Activated T-helper 1 cell treated with anti-CD3 and anti-CD28 coated beads, Interleukin-12 subunit alpha, Interleukin-12 subunit beta, Interleukin-2, Interleukin-4 antibody, amounts not matched to agents 30 ng/mL and 10 ng/mL and 1 ng/mL, durations not matched to agents 14 hours and 24 hours and 36 hours (primary cell): ENCODE measurements at regions of chr7 and their contacts with region 1.

Region 1: GRCh38 chr7:143214789-143215679 is 6.8 kb upstream of the TAS2R40 start:
- DNase-seq: peak; percentile 57
- H3K4me3 Mint-ChIP-seq: no peak overlapping the region
- H3K27ac Mint-ChIP-seq: no peak overlapping the region
- H3K4me1 Mint-ChIP-seq: no peaks in the 10 kb centered on the region
- H3K27me3 Mint-ChIP-seq: peaks cover 14% of the 10 kb centered on the region

Region 2: DNA sequence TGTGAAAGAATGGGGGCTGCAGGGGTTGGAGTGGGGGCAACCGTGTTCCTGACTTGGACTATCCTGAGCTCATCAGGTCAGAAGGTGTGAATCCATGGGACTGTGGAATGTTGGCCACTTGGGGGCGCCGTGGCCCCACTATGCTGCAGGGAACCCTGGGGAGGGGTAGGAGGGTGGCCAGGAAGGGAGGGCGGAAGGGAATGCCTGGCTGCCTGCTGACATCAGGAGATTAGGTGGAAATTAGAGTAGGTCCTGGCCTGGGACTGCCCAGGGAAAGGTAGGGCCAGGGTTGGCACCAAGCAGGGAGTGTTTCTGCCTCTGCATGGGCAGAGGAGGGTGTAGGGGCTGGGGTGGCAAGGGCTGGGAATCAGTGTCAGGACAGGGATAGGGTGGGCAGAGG is 891.3 kb before region 1 on chr7:
- intact Hi-C with region 1: loop called (anchors 10 kb)
- DNase-seq: no peak
- H3K4me3 Mint-ChIP-seq: no peak overlapping the region
- H3K27ac Mint-ChIP-seq: no peak overlapping the region
- H3K4me1 Mint-ChIP-seq: no peaks in the 10 kb centered on the region
- H3K27me3 Mint-ChIP-seq: peaks cover 5% of the 10 kb centered on the region

Region 3: GRCh38 chr7:142516038-142516501 is 699.0 kb before region 1 on chr7:
- intact Hi-C with region 1: loop called (anchors 5 kb)
- DNase-seq: no peak
- H3K4me3 Mint-ChIP-seq: no peak overlapping the region
- H3K27ac Mint-ChIP-seq: no peak overlapping the region
- H3K4me1 Mint-ChIP-seq: peaks cover 19% of the 10 kb centered on the region
- H3K27me3 Mint-ChIP-seq: peaks cover 7% of the 10 kb centered on the region

Region 4: GRCh38 chr7:142603870-142604448 is 611.1 kb before region 1 on chr7:
- intact Hi-C with region 1: loop called (anchors 5 kb)
- DNase-seq: no peak
- H3K4me3 Mint-ChIP-seq: no peak overlapping the region
- H3K27ac Mint-ChIP-seq: no peak overlapping the region
- H3K4me1 Mint-ChIP-seq: peaks cover 9% of the 10 kb centered on the region
- H3K27me3 Mint-ChIP-seq: peaks cover 6% of the 10 kb centered on the region

Region 5: DNA sequence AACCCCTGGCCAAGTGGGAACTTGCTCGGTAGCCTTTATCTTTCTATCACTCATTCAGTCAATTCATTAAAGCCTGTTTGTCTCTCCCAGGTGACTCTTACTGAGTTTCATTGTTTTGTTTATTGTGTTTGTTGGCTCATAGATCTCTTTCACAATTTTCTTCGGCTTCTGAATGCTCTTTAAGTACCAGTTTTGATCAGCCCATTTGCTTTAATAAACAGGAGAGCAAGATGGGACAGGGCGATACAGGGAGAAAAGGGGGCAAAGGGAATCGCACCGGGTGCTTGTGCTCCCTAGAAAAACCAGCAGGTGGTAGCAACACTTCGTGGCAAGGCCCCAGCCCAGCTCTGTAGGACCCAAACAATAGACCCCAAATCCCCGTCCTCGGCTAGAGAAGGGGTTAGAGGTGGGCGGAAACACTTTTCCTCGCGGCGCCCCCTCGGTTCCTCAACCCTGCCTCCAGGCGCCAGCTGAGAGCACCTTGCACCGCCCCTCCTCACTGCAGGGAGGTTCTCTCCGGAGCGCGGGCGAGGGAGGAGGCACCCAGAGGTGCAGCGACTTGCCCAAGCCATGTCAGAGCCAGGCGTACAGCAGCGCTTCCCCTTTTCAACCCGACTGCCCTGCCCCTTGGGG is 361.2 kb before region 1 on chr7:
- intact Hi-C with region 1: loop called (anchors 1 kb)
- DNase-seq: peak; percentile 50
- H3K4me3 Mint-ChIP-seq: peak overlapping the region; percentile 96
- H3K27ac Mint-ChIP-seq: peak overlapping the region; percentile 82
- H3K4me1 Mint-ChIP-seq: peaks cover 7% of the 10 kb centered on the region
- H3K27me3 Mint-ChIP-seq: peaks cover 25% of the 10 kb centered on the region

Region 6: DNA sequence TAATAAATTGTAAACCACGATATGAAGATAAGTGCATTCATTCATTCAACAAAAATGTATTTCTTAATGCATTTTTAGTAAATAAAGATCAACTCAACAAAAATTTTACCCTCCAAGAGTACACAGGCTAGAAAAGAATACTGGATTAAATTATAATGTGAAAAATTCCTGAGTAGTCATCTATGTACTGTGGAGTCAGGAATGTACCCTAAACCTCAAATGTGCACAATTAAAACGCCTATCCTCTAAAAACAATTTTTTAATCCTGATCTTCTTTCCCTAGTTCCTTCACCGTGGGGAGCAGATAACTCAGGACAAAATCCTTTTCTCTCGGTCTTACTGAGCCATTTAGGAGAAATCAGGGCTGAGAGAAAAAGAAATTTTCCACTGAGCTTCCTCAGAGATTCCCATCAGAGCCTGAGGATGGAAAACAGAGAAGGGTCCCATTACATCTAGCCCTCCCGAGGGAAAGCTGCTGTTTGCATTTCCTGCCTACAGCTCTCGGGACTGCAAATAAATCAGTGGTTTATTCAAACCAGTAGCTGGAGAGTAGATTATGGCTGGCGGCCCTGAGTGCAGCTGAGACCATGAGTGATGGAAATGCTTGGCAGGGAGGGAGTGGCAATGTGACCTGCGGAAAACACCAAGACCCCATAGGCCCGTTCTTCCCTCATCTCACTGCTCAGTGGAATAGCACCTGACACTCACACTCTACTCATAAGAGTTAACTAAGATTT is 14.2 kb after region 1 on chr7:
- intact Hi-C with region 1: no loop called
- DNase-seq: no peak
- H3K4me3 Mint-ChIP-seq: no peak overlapping the region
- H3K27ac Mint-ChIP-seq: no peak overlapping the region
- H3K4me1 Mint-ChIP-seq: no peaks in the 10 kb centered on the region
- H3K27me3 Mint-ChIP-seq: peaks cover 16% of the 10 kb centered on the region